WTC11 (cell line): ENCODE measurements at regions of chr17 and their contacts with region 1.

Region 1: GRCh38 chr17:2054512-2055291 is at the start of gene HIC1:
- DNase-seq: peak; percentile 80
- ATAC-seq: peak; percentile 28
- H3K4me3 Mint-ChIP-seq: peak within 1 kb of the TSS; percentile 60
- H3K27ac Mint-ChIP-seq: no peak within 1 kb of the TSS
- H3K4me1 Mint-ChIP-seq: peaks cover 4% of the 10 kb centered on the region
- H3K27me3 Mint-ChIP-seq: peaks cover 68% of the 10 kb centered on the region
- CTCF ChIP-seq: peak; percentile 86
- total RNA-seq, gene HIC1: 0.37 to 0.46 TPM (median 0.39 TPM) in 3 replicates

Region 2: GRCh38 chr17:1693339-1693738 is 361.4 kb before region 1 on chr17:
- CTCF ChIA-PET with region 1: no interaction called
- POLR2A ChIA-PET with region 1: no interaction called
- DNase-seq: no peak
- ATAC-seq: no peak
- H3K4me3 Mint-ChIP-seq: no peak overlapping the region
- H3K27ac Mint-ChIP-seq: no peak overlapping the region
- H3K4me1 Mint-ChIP-seq: no peaks in the 10 kb centered on the region
- H3K27me3 Mint-ChIP-seq: peaks cover 6% of the 10 kb centered on the region
- CTCF ChIP-seq: no peak

Region 3: GRCh38 chr17:1908699-1909309 is 145.9 kb before region 1 on chr17:
- CTCF ChIA-PET with region 1: interaction called, 19 read pairs
- POLR2A ChIA-PET with region 1: no interaction called
- DNase-seq: peak; percentile 69
- ATAC-seq: peak; percentile 87
- H3K4me3 Mint-ChIP-seq: peak overlapping the region; percentile 63
- H3K27ac Mint-ChIP-seq: no peak overlapping the region
- H3K4me1 Mint-ChIP-seq: peaks cover 2% of the 10 kb centered on the region
- H3K27me3 Mint-ChIP-seq: peaks cover 98% of the 10 kb centered on the region
- CTCF ChIP-seq: peak; percentile 40; the same call in 1 of the 2 replicates

Region 4: DNA sequence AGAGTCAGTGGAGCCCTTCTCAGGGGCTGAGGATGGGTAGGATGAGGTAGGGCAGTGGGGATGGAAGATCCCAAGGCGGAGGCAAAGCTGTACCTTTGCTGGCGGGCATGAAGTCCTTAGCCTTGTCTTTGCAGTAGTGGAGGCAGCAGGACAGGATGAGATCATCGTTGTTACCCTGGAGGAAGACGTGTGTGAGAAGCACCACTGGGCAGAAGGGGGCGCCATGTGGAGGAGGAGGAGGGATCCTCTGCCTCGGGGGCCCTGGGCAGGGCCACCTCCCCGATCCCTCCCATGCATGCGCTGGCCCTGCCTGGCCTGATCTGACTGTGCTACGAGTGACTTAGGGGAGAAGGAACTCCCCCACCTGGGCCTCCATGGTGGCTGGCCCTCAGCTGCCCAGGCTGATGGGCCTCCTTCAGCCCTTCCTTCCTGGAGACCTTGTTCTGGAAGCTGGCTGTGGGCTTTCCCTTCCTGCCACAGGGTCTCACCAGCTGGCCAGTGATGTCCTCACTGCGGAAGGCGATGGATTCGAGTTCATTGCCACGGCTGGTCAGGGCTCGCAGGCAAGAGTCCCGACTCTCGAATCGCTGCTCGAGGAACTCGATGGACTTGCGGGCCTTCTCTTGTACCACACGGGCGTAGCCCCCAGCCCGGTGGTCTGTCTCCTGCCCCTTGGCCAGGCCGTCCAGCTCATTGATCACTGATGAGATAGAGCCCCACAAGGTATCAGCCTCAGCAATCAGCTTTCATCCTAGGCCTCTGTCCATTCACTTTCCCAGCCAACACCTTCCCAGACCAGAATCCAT is 10.5 kb after region 1 on chr17:
- CTCF ChIA-PET with region 1: interaction called, 96 read pairs
- POLR2A ChIA-PET with region 1: no interaction called
- DNase-seq: peak; percentile 90
- ATAC-seq: peak; percentile 85
- H3K4me3 Mint-ChIP-seq: no peak overlapping the region
- H3K27ac Mint-ChIP-seq: peak overlapping the region; percentile 74; the same call in 1 of the 2 replicates
- H3K4me1 Mint-ChIP-seq: peaks cover 31% of the 10 kb centered on the region
- H3K27me3 Mint-ChIP-seq: peaks cover 13% of the 10 kb centered on the region
- CTCF ChIP-seq: peak; percentile 65

Region 5: DNA sequence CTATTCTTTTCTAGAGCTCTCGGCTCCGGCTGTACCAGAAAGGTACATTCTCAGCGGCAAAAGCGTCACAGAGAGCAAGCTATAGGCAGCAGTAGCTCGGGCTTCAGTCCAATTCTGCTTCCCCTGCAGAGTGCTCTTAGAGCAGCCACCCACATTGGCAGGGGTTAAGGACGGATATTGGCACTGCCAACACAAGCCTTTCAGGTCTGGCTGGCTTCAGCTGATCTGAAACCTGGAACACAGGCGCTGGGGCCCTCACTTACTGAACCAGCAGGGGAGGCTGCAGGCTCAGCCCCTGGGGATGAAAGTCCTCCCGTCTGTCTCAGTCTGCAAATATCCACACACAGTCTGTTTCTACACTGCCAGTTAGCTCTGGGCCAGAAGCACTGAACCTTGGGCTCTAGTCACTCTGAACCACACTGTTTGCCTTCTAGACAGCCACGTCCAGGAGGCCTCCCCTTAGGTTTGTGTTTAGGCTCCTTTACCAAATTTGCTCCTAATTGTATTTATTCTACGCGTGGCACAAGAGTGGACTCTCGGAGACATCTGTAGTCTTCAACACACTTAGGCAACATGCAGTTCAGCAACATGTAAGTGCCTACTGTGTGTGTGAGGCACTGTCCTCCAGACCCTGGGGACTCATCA is 40.3 kb after region 1 on chr17:
- CTCF ChIA-PET with region 1: interaction called, 18 read pairs
- POLR2A ChIA-PET with region 1: no interaction called
- DNase-seq: peak; percentile 35
- ATAC-seq: peak; percentile 46
- H3K4me3 Mint-ChIP-seq: no peak overlapping the region
- H3K27ac Mint-ChIP-seq: peak overlapping the region; percentile 77
- H3K4me1 Mint-ChIP-seq: peaks cover 30% of the 10 kb centered on the region
- H3K27me3 Mint-ChIP-seq: no peaks in the 10 kb centered on the region
- CTCF ChIP-seq: no peak

Region 6: GRCh38 chr17:2215616-2216364 is 161.1 kb after region 1 on chr17:
- CTCF ChIA-PET with region 1: interaction called, 11 read pairs
- POLR2A ChIA-PET with region 1: no interaction called
- DNase-seq: peak; percentile 33
- ATAC-seq: peak; percentile 85
- H3K4me3 Mint-ChIP-seq: peak overlapping the region; percentile 25; the same call in 1 of the 2 replicates
- H3K27ac Mint-ChIP-seq: peak overlapping the region; percentile 51
- H3K4me1 Mint-ChIP-seq: peaks cover 33% of the 10 kb centered on the region
- H3K27me3 Mint-ChIP-seq: no peaks in the 10 kb centered on the region
- CTCF ChIP-seq: no peak

Region 7: GRCh38 chr17:2336215-2336851 is 281.6 kb after region 1 on chr17 and contains the start of gene TSR1:
- CTCF ChIA-PET with region 1: interaction called, 22 read pairs
- POLR2A ChIA-PET with region 1: no interaction called
- DNase-seq: peak; percentile 90
- ATAC-seq: peak; percentile 81
- H3K4me3 Mint-ChIP-seq: no peak within 1 kb of the TSS; the same call in 1 of the 2 replicates
- H3K27ac Mint-ChIP-seq: peak within 1 kb of the TSS; percentile 99
- H3K4me1 Mint-ChIP-seq: peaks cover 4% of the 10 kb centered on the region
- H3K27me3 Mint-ChIP-seq: no peaks in the 10 kb centered on the region
- CTCF ChIP-seq: no peak
- total RNA-seq, gene TSR1: 59.1 to 74.3 TPM (median 59.7 TPM) in 3 replicates